Sigmoid colon (tissue), 7 donors: ENCODE measurements at regions of chr9 and their contacts with region 1.

Region 1: GRCh38 chr9:134738869-134739659 is 97.5 kb downstream of the COL5A1 start:
- DNase-seq: peak; percentile 91
- H3K4me3 ChIP-seq: no peak overlapping the region
- H3K27ac ChIP-seq: peak overlapping the region in 3 of 4 donors; percentile 26 to 93 (median 34)
- H3K4me1 ChIP-seq: peaks cover 0 to 43% (median 26%) of the 10 kb centered on the region in 4 donors
- H3K27me3 ChIP-seq: no peaks in the 10 kb centered on the region
- CTCF ChIP-seq: peak; percentile 90 to 98 (median 94)
- EP300 ChIP-seq: no peak
- POLR2A ChIP-seq: no peak

Region 2: GRCh38 chr9:134449221-134449894 is 289.7 kb before region 1 on chr9:
- intact Hi-C with region 1: loop called (anchors 1 kb)
- DNase-seq: peak; percentile 98
- H3K4me3 ChIP-seq: no peak overlapping the region
- H3K27ac ChIP-seq: no peak overlapping the region
- H3K4me1 ChIP-seq: no peaks in the 10 kb centered on the region
- H3K27me3 ChIP-seq: no peaks in the 10 kb centered on the region
- CTCF ChIP-seq: peak; percentile 85 to 97 (median 94)
- EP300 ChIP-seq: no peak
- POLR2A ChIP-seq: no peak

Region 3: DNA sequence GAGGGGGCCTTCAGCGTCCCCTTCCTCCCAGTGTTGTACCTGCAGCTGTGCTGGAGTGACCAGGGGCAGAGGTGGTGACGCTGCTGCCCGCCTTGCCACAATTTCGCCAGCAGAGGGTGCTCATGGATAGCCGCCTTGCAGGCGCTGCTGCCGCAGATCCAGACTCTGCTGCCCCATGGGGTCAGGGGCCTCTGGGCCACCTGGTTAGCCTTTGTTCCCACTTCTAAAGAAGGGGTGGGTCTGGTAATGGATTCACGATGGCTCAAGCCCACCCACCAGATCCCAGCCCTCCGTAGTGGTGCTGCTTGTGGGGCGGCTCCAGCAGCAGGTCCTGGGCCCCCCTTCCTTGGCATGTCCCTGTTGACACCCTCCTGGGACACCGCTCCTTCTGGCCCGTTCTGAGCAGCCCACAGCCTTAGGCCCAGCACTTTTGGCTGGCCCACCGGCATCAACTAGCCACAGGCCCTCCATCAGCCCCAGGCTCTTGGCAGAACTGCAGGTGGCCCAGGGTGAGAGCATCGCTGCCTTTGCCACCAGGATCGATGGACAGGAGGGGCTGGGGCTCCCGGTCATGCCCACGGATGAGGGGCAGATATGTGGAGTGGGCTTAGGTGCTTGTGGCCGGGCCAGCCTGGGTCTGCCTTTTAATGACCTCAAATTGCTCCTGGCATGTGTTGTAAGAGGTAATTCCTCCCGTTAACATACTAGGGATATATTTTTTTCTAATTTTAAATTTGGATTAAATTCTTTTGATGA is 40.3 kb before region 1 on chr9:
- intact Hi-C with region 1: loop called (anchors 1 kb)
- DNase-seq: peak; percentile 86
- H3K4me3 ChIP-seq: no peak overlapping the region
- H3K27ac ChIP-seq: peak overlapping the region in 3 of 4 donors; percentile 46 to 67 (median 50)
- H3K4me1 ChIP-seq: peaks cover 0 to 47% (median 31%) of the 10 kb centered on the region in 4 donors
- H3K27me3 ChIP-seq: no peaks in the 10 kb centered on the region
- CTCF ChIP-seq: peak; percentile 86 to 97 (median 93)
- EP300 ChIP-seq: no peak
- POLR2A ChIP-seq: no peak

Region 4: DNA sequence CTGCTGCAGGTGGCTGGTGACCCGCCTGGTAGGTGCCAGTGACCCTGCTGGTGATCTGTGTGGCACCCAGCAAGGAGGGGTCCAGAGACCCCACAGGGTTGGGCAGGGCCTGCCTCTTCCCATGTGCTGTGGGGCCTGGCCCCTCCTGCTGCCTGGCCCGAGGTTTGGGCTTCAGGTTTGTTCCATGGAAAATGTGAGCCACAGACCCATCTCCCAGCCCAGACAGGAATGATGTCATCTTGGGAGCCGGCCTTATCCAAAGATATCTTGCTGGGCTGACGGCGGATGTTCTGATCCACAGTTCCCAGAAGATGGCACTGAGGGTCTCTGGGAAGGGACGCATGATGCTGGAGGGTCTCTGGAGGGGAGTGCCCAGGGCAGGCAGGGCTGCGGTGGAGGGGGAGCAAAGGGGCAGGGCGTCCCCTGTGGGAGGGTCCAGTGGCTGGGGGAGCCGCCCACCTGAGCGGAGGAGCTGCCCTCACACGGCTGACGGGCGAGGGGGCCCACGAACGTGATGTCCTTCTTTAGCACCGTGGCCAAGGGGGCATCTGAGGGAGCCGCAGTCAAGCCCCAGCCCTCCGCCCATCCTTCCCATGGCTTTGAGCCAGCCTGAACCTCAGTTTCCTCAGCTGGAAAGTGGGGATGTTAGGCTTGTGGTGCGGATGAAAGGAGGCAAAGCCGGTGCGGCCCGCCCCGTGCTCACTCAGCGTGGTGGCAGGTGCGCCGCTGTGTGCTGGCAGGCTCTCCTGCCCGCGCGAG is 29.4 kb before region 1 on chr9:
- intact Hi-C with region 1: loop called (anchors 2 kb)
- DNase-seq: peak; percentile 93
- H3K4me3 ChIP-seq: no peak overlapping the region
- H3K27ac ChIP-seq: peak overlapping the region; percentile 87 to 98 (median 94)
- H3K4me1 ChIP-seq: peaks cover 0 to 88% (median 84%) of the 10 kb centered on the region in 4 donors
- H3K27me3 ChIP-seq: no peaks in the 10 kb centered on the region
- CTCF ChIP-seq: no peak
- EP300 ChIP-seq: peak in 1 of 4 donors; percentile 76
- POLR2A ChIP-seq: no peak

Region 5: DNA sequence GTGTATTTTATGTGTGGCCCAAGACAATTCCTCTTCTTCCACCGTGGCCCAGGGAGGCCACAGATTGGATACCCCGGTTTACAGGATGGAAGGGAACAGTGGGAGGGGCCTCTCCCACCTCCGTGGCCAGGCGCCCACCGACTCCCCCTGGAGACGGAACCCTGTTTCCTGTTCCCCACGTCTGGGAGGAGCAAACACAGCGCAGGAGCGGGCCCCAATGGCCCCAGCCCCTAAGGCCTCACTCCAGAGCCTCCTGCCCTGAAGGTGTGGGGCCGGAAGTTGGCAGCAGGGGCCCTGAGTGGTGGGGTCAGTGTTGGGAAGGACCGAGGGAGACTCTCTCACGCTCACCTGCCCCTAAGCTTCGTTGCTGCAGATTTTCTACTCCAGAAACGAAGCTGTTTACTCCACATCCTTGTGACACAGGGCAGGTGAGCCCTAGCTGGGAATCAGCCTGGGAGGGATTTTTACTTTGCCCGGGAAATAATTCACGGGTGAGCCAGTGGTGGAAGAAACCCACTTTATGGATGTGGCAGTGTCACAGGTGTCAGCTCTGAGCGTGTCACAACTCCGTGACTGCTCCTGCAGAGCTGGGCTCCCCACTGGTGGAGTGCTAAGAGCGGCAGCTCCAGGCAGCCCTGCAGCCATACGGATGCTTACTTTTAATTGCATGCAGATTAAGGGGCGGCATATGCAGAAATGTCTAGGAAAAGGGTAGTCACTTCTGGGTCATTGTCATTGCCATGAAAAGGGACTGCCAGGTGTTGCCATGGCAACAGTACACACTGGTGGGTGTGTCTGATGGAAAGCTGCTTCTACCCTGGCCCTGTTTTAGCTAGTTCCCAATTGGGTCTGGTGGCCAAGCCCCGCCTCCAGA is 270.9 kb after region 1 on chr9:
- intact Hi-C with region 1: no loop called
- DNase-seq: no peak
- H3K4me3 ChIP-seq: no peak overlapping the region
- H3K27ac ChIP-seq: no peak overlapping the region
- H3K4me1 ChIP-seq: no peaks in the 10 kb centered on the region
- H3K27me3 ChIP-seq: peaks cover 0 to 12% (median 0%) of the 10 kb centered on the region in 3 donors
- CTCF ChIP-seq: no peak
- EP300 ChIP-seq: no peak
- POLR2A ChIP-seq: no peak

Region 6: DNA sequence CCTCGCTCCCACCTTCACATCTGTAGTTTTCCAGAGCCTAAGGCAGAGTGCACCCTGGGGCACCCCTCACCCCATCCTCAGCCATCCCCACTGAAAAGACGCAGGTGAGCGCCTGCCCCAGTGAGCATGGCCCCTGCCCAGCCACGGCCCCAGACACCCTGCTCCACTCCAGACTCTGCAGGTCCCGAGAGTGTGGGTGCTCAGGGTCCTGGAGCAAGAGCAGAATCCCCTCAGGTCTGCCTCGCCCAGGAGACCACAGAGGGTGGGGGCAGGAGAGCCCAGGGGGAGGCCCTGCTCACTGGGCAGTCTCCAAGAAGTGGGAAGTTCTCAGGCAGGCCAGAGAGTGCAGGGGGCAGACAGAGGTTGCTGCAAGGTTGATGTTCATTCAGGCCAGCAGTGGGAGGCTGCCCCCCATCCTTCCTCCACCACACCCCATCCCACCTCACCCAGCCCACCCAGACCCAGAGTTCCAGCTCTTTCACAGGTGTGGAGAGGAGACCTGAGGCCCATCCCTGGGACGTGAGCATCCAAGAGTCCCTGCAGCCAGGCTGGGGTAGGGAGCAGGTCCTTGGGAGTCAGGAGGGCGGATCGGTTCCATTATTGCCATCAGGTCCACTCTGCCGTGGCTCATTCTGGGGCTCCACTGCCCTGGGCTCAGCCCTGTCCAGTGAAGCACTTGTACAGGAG is 582.0 kb after region 1 on chr9:
- intact Hi-C with region 1: no loop called
- DNase-seq: no peak
- H3K4me3 ChIP-seq: no peak overlapping the region
- H3K27ac ChIP-seq: no peak overlapping the region
- H3K4me1 ChIP-seq: no peaks in the 10 kb centered on the region
- H3K27me3 ChIP-seq: peaks cover 0 to 28% (median 0%) of the 10 kb centered on the region in 3 donors
- CTCF ChIP-seq: no peak
- EP300 ChIP-seq: no peak
- POLR2A ChIP-seq: no peak